CD4-positive, alpha-beta memory T cell (primary cell): ENCODE measurements at regions of chr1 and their contacts with region 1.

Region 1: DNA sequence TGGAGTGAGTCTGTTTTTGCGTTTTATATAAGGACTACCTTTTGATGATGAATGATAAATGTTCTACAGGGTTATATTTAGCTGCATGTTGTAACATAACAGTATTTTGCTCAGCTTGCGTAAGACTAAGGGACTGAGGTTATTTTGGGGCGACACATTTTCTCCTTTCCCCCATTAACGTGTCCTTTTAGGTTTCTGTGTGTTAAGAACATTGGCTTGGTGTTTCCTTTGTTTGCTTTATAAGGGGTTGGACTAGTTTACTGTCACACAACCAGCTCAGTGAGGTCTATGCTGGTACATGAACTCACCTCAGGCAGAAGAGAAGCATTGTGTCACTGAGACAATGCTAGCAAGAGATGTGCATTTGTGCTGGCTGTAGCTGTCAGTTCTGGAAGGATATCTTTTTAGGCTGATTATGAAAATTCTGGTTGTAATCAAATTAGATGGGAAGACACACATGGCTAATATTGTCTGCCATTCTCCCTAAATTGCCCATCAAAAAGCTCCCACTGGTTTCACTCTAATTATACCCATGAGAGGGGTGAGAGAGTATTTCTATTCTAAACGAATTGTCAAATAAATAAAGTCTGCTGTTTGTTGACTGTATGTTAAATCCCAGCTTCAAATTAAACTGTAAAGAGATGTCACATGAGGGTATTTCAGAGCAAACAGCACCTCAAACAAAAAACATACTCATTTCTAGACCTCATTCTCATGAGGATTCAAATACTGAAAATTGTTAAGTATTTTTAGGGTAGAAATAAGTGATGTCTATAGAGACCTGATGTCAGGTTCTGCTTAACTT is 62.6 kb downstream of the CDC14A start:
- DNase-seq: peak; percentile 39 to 55 (median 50)
- H3K4me3 ChIP-seq: peak overlapping the region in 1 of 2 donors; percentile 2
- H3K4me3 Mint-ChIP-seq: peak overlapping the region in 7 of 8 donors; percentile 29 to 87 (median 70)
- H3K27ac ChIP-seq: peak overlapping the region; percentile 48
- H3K27ac Mint-ChIP-seq: peak overlapping the region; percentile 73 to 96 (median 89)
- H3K4me1 ChIP-seq: peaks cover 96% of the 10 kb centered on the region
- H3K4me1 Mint-ChIP-seq: peaks cover 70 to 89% (median 79%) of the 10 kb centered on the region in 4 donors
- H3K27me3 ChIP-seq: no peaks in the 10 kb centered on the region
- H3K27me3 Mint-ChIP-seq: no peaks in the 10 kb centered on the region

Region 2: GRCh38 chr1:100387209-100387608 is 27.7 kb before region 1 on chr1:
- CTCF ChIA-PET with region 1: interaction called, 5 read pairs
- POLR2A ChIA-PET with region 1: interaction called, 14 read pairs
- intact Hi-C with region 1: no loop called
- DNase-seq: no peak
- H3K4me3 ChIP-seq: no peak overlapping the region
- H3K4me3 Mint-ChIP-seq: peak overlapping the region; percentile 67 to 80 (median 73)
- H3K27ac ChIP-seq: peak overlapping the region; percentile 65
- H3K27ac Mint-ChIP-seq: peak overlapping the region; percentile 89 to 95 (median 93)
- H3K4me1 ChIP-seq: peaks cover 98% of the 10 kb centered on the region
- H3K4me1 Mint-ChIP-seq: peaks cover 69 to 98% (median 87%) of the 10 kb centered on the region in 4 donors
- H3K27me3 ChIP-seq: no peaks in the 10 kb centered on the region
- H3K27me3 Mint-ChIP-seq: no peaks in the 10 kb centered on the region

Region 3: GRCh38 chr1:100394285-100394684 is 20.6 kb before region 1 on chr1:
- CTCF ChIA-PET with region 1: interaction called, 18 read pairs
- POLR2A ChIA-PET with region 1: interaction called, 31 read pairs
- intact Hi-C with region 1: no loop called
- DNase-seq: no peak
- H3K4me3 ChIP-seq: no peak overlapping the region
- H3K4me3 Mint-ChIP-seq: peak overlapping the region; percentile 4 to 80 (median 70)
- H3K27ac ChIP-seq: peak overlapping the region; percentile 54
- H3K27ac Mint-ChIP-seq: peak overlapping the region; percentile 73 to 93 (median 88)
- H3K4me1 ChIP-seq: peaks cover 100% of the 10 kb centered on the region
- H3K4me1 Mint-ChIP-seq: peaks cover 78 to 99% (median 90%) of the 10 kb centered on the region in 4 donors
- H3K27me3 ChIP-seq: no peaks in the 10 kb centered on the region
- H3K27me3 Mint-ChIP-seq: no peaks in the 10 kb centered on the region

Region 4: DNA sequence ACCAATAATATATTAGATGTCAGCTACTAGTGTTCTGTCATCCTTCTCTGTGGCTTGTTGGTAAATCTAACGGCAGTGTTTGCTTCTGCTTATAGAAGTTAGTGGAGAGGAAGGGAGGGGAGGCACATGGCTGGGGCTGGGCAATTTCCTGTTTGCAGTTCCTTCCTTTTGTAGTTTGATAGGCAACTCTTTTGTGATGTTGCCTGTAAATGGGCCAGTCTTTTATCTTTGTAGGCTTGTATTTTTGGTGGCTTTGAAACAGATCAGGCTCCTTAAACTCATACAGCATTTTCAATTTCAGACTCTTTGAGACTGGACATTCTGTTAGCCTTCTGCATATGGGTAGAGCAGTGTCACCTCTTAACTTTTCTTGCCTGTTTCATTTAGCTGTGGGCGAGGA is 14.5 kb before region 1 on chr1:
- CTCF ChIA-PET with region 1: interaction called, 18 read pairs
- POLR2A ChIA-PET with region 1: interaction called, 58 read pairs
- intact Hi-C with region 1: loop called (anchors 1 kb)
- DNase-seq: peak; percentile 78 to 90 (median 86)
- H3K4me3 ChIP-seq: peak overlapping the region in 1 of 2 donors; percentile 25
- H3K4me3 Mint-ChIP-seq: peak overlapping the region; percentile 74 to 85 (median 82)
- H3K27ac ChIP-seq: peak overlapping the region; percentile 55
- H3K27ac Mint-ChIP-seq: peak overlapping the region; percentile 89 to 95 (median 92)
- H3K4me1 ChIP-seq: peaks cover 100% of the 10 kb centered on the region
- H3K4me1 Mint-ChIP-seq: peaks cover 66 to 92% (median 80%) of the 10 kb centered on the region in 4 donors
- H3K27me3 ChIP-seq: no peaks in the 10 kb centered on the region
- H3K27me3 Mint-ChIP-seq: no peaks in the 10 kb centered on the region

Region 5: DNA sequence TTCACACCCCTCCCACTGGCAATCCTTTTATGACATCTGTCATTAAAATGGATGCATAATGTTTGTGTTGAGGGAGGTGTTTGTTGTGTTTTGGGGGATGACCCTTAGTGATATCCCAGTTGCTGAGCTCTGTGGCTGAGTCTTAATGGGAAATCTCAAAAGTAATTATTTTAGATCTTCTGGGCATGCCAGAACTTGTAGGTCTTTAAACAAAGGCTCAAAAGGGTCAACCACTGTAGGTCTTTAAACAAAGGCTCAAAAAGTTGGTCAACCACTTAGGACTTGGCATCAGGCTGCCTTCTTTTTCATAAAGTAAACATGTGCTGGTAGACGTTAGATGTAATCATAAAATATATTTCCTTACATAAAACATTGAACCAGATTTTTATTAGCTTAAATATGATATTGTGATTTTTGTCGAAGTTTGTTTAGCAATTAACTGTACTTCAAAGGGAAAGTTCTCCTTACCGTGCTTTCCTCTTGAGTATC is 15.5 kb after region 1 on chr1:
- CTCF ChIA-PET with region 1: no interaction called
- POLR2A ChIA-PET with region 1: interaction called, 97 read pairs
- intact Hi-C with region 1: no loop called
- DNase-seq: no peak
- H3K4me3 ChIP-seq: no peak overlapping the region
- H3K4me3 Mint-ChIP-seq: peak overlapping the region in 3 of 8 donors; percentile 3 to 26 (median 13)
- H3K27ac ChIP-seq: no peak overlapping the region
- H3K27ac Mint-ChIP-seq: peak overlapping the region in 6 of 7 donors; percentile 35 to 76 (median 59)
- H3K4me1 ChIP-seq: peaks cover 78% of the 10 kb centered on the region
- H3K4me1 Mint-ChIP-seq: peaks cover 50 to 76% (median 64%) of the 10 kb centered on the region in 4 donors
- H3K27me3 ChIP-seq: no peaks in the 10 kb centered on the region
- H3K27me3 Mint-ChIP-seq: no peaks in the 10 kb centered on the region

Region 6: GRCh38 chr1:100443811-100444571 is 29.1 kb after region 1 on chr1:
- CTCF ChIA-PET with region 1: interaction called, 7 read pairs
- POLR2A ChIA-PET with region 1: interaction called, 272 read pairs
- intact Hi-C with region 1: no loop called
- DNase-seq: peak; percentile 52 to 69 (median 61)
- H3K4me3 ChIP-seq: peak overlapping the region; percentile 8 to 26
- H3K4me3 Mint-ChIP-seq: peak overlapping the region; percentile 74 to 91 (median 80)
- H3K27ac ChIP-seq: peak overlapping the region; percentile 96
- H3K27ac Mint-ChIP-seq: peak overlapping the region; percentile 98 to 100 (median 99)
- H3K4me1 ChIP-seq: peaks cover 99% of the 10 kb centered on the region
- H3K4me1 Mint-ChIP-seq: peaks cover 65 to 93% (median 75%) of the 10 kb centered on the region in 4 donors
- H3K27me3 ChIP-seq: no peaks in the 10 kb centered on the region
- H3K27me3 Mint-ChIP-seq: no peaks in the 10 kb centered on the region

Region 7: GRCh38 chr1:100485855-100486258 is 71.0 kb after region 1 on chr1:
- CTCF ChIA-PET with region 1: no interaction called
- POLR2A ChIA-PET with region 1: no interaction called
- intact Hi-C with region 1: no loop called
- DNase-seq: no peak
- H3K4me3 ChIP-seq: no peak overlapping the region
- H3K4me3 Mint-ChIP-seq: no peak overlapping the region
- H3K27ac ChIP-seq: no peak overlapping the region
- H3K27ac Mint-ChIP-seq: peak overlapping the region in 3 of 7 donors; percentile 42 to 50 (median 48)
- H3K4me1 ChIP-seq: no peaks in the 10 kb centered on the region
- H3K4me1 Mint-ChIP-seq: peaks cover 0 to 9% (median 7%) of the 10 kb centered on the region in 4 donors
- H3K27me3 ChIP-seq: no peaks in the 10 kb centered on the region
- H3K27me3 Mint-ChIP-seq: no peaks in the 10 kb centered on the region